Activated B cell treated with CpG ODN at 0.5 μM for 24 hours (primary cell): ENCODE measurements at regions of chr9 and their contacts with region 1.

Region 1: GRCh38 chr9:78439190-78439865 is 142.4 kb downstream of the PSAT1 start:
- DNase-seq: peak; percentile 37
- ATAC-seq: peak; percentile 78
- H3K4me3 Mint-ChIP-seq: no peak overlapping the region
- H3K27ac Mint-ChIP-seq: no peak overlapping the region
- H3K4me1 Mint-ChIP-seq: no peaks in the 10 kb centered on the region
- H3K27me3 Mint-ChIP-seq: peaks cover 18% of the 10 kb centered on the region
- CTCF ChIP-seq: peak; percentile 78

Region 2: DNA sequence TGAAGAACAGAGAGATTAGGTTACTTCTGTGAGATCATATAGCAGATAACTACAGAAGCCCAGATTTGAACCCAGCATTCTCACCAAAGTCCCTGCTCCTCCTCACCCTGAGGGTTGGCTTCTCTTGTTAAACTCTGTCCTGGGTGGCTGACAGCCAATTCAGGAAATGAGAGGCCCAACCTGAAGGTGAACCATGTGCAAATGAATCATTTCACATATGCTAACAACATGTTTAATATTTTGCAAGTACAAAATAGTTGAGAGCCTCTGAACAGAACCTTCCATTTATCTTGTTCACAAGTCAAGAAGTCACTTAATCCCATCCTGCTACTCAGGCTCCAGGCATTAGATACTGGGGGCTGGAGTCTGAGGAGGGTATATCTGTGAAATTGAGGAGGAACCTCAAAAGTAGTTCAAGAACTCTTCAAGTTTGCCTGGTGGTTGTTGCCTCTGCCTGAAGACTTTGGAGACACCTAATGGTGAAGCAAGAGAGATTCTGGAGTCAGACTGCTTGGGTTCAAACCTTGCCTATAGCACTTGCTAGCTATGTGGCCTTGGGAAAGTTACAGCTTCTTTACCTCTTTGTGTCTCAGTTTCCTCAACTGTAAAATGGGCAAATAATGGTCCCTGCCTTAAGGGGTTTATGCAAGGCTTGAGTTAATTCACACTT is 421.6 kb after region 1 on chr9:
- CTCF ChIA-PET with region 1: no interaction called
- POLR2A ChIA-PET with region 1: no interaction called
- intact Hi-C with region 1: loop called (anchors 1 kb)
- DNase-seq: no peak
- ATAC-seq: no peak
- H3K4me3 Mint-ChIP-seq: no peak overlapping the region
- H3K27ac Mint-ChIP-seq: no peak overlapping the region
- H3K4me1 Mint-ChIP-seq: no peaks in the 10 kb centered on the region
- H3K27me3 Mint-ChIP-seq: no peaks in the 10 kb centered on the region
- CTCF ChIP-seq: no peak

Region 3: DNA sequence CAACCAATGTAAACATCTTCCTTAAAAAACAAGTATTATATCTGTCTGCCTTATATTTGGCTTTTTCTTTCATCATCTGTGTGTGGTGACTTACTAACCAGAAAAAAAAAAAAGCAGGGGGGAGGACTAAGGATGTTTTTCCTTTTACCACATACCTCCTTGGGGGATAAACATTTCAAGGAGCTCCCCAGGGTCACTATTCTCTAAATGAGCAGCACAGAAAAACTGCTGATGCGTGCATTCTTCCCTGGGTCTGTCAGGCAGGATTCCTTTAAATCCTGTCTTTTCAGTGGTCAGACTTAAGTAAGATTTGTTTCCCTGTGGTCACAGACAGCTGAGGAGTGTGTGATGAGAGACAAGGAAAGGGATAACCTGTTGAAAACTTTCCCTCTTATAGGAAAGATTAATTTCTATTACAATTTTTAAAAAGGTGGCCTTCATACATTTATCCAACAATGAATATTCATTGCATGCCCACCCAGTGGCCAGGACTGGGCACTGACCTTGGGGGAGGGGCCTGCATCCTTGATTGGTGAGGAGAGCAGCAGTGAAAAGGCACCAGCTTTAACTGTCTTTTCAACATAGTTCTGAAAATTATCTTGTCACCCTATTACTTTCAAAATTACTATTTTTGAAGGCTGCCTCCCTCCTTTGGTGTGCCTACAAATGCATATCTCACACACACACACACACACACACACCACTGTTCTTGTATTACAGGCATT is 1255.5 kb after region 1 on chr9:
- CTCF ChIA-PET with region 1: no interaction called
- POLR2A ChIA-PET with region 1: no interaction called
- intact Hi-C with region 1: loop called (anchors 5 kb)
- DNase-seq: no peak
- ATAC-seq: no peak
- H3K4me3 Mint-ChIP-seq: no peak overlapping the region
- H3K27ac Mint-ChIP-seq: no peak overlapping the region
- H3K4me1 Mint-ChIP-seq: peaks cover 22% of the 10 kb centered on the region
- H3K27me3 Mint-ChIP-seq: no peaks in the 10 kb centered on the region
- CTCF ChIP-seq: no peak